ENCODE measurements at regions of chr14 and their contacts with region 1.

Region 1: GRCh38 chr14:50038398-50039119 is 77.8 kb downstream of the VCPKMT start:
- DNase-seq: peak; percentile 90
- ATAC-seq: peak; percentile 84
- H3K4me3 Mint-ChIP-seq: peak overlapping the region; percentile 69
- H3K27ac Mint-ChIP-seq: peak overlapping the region; percentile 97
- H3K4me1 Mint-ChIP-seq: peaks cover 61% of the 10 kb centered on the region
- H3K27me3 Mint-ChIP-seq: no peaks in the 10 kb centered on the region
- CTCF ChIP-seq: no peak

Region 2: GRCh38 chr14:49897968-49898367 is 140.6 kb before region 1 on chr14:
- CTCF ChIA-PET with region 1: interaction called, 3 read pairs
- POLR2A ChIA-PET with region 1: interaction called, 10 read pairs
- intact Hi-C with region 1: loop called (anchors 2 kb)
- DNase-seq: no peak
- ATAC-seq: no peak
- H3K4me3 Mint-ChIP-seq: peak overlapping the region; percentile 88
- H3K27ac Mint-ChIP-seq: peak overlapping the region; percentile 93
- H3K4me1 Mint-ChIP-seq: peaks cover 22% of the 10 kb centered on the region
- H3K27me3 Mint-ChIP-seq: no peaks in the 10 kb centered on the region
- CTCF ChIP-seq: no peak

Region 3: DNA sequence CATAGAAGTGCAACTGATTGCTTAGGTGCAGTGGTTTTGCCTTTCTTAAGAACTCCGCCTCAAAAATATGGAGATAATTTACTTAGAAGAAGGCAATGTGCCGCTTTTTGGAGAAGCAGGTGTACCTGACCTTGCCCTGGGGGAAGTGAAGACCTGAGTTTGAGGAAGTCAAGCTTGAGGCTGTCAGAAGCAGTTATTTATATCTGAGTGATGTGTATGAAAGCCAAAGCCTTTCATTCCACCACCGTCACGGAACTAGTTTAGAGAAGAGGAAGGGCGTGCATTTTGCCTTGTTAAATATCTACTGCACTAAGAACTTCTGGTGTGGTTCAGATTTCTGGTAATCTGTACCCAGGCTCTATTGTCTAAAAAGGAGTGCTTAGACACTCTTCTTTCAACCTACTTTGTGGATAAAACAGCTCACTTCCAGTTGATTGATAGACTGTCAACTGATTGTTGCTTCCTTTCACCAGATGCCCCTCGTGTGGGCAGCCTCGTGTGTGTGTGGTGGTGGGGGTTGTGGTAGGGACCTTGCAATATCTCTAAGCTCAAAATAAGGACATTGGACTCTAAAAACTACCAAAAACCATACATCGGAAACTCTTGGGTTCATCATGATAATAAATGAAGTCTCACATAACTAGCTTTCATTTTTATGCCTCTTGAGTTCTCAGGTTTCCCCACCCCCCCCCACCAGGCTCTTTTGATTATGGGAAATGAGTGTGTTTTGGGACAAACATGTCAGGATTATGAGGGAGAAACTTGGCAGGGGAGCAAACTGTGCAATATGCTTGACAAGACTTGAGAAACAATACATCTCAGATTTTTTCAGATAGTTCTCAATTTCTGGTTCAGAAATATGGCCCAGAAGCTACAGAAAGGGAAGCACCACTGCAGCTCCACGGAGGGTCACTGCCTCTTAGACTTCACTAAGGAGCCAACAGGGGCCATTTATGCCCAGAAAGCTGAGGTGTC is 67.1 kb before region 1 on chr14:
- CTCF ChIA-PET with region 1: interaction called, 3 read pairs
- POLR2A ChIA-PET with region 1: interaction called, 16 read pairs
- intact Hi-C with region 1: no loop called
- DNase-seq: peak; percentile 90
- ATAC-seq: peak; percentile 75
- H3K4me3 Mint-ChIP-seq: peak overlapping the region; percentile 69
- H3K27ac Mint-ChIP-seq: peak overlapping the region; percentile 94
- H3K4me1 Mint-ChIP-seq: peaks cover 56% of the 10 kb centered on the region
- H3K27me3 Mint-ChIP-seq: no peaks in the 10 kb centered on the region
- CTCF ChIP-seq: no peak

Region 4: DNA sequence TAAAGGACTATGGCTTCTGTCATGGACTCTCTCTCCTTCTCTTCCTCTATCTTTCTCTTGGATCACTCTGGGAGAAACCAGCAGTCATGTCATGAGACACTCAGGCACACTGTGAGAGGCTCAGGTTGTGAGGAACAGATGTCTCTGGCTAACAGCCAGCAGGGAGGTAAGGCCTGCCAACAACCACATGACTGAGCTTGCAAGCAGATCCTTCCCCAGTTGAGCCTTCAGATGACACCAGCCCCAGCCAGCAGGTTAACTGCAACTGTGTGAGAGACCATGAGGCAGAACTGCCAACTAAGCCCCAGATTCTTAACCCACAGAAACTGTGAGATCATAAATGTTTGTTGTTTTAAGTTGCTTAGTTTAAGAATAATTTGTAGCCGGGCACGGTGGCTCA is 12.8 kb before region 1 on chr14:
- CTCF ChIA-PET with region 1: interaction called, 6 read pairs
- POLR2A ChIA-PET with region 1: interaction called, 24 read pairs
- intact Hi-C with region 1: no loop called
- DNase-seq: peak; percentile 56
- ATAC-seq: no peak
- H3K4me3 Mint-ChIP-seq: no peak overlapping the region
- H3K27ac Mint-ChIP-seq: no peak overlapping the region
- H3K4me1 Mint-ChIP-seq: peaks cover 24% of the 10 kb centered on the region
- H3K27me3 Mint-ChIP-seq: no peaks in the 10 kb centered on the region
- CTCF ChIP-seq: no peak

Region 5: GRCh38 chr14:50085570-50086320 is 47.2 kb after region 1 on chr14:
- CTCF ChIA-PET with region 1: interaction called, 17 read pairs
- POLR2A ChIA-PET with region 1: interaction called, 32 read pairs
- intact Hi-C with region 1: loop called (anchors 2 kb)
- DNase-seq: peak; percentile 62
- ATAC-seq: peak; percentile 24
- H3K4me3 Mint-ChIP-seq: peak overlapping the region; percentile 56
- H3K27ac Mint-ChIP-seq: peak overlapping the region; percentile 98
- H3K4me1 Mint-ChIP-seq: peaks cover 94% of the 10 kb centered on the region
- H3K27me3 Mint-ChIP-seq: no peaks in the 10 kb centered on the region
- CTCF ChIP-seq: no peak

Region 6: GRCh38 chr14:50095895-50096294 is 57.3 kb after region 1 on chr14:
- CTCF ChIA-PET with region 1: interaction called, 4 read pairs
- POLR2A ChIA-PET with region 1: interaction called, 10 read pairs
- intact Hi-C with region 1: no loop called
- DNase-seq: no peak
- ATAC-seq: peak; percentile 60
- H3K4me3 Mint-ChIP-seq: peak overlapping the region; percentile 31
- H3K27ac Mint-ChIP-seq: peak overlapping the region; percentile 87
- H3K4me1 Mint-ChIP-seq: peaks cover 81% of the 10 kb centered on the region
- H3K27me3 Mint-ChIP-seq: no peaks in the 10 kb centered on the region
- CTCF ChIP-seq: no peak

Region 7: DNA sequence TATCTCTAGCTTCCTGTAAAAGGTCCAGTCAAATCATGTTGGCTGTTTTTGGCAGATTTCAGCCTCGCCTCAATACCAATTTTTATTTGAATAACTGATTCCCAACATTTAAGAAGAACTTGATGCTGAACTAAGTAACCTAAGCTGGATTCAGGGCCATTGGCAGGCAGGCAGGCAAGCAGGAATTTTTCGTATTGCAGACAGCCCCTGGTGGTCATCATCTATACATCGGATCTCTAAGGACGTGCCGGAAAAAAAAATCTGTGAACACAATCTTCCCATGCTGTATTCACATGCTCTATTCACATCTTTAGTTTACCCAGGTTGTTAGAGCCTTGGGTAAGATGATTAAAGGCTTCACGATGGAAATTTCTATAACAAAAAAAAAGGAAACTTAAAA is 70.8 kb after region 1 on chr14:
- CTCF ChIA-PET with region 1: interaction called, 14 read pairs
- POLR2A ChIA-PET with region 1: interaction called, 6 read pairs
- intact Hi-C with region 1: loop called (anchors 2 kb)
- DNase-seq: no peak
- ATAC-seq: no peak
- H3K4me3 Mint-ChIP-seq: no peak overlapping the region
- H3K27ac Mint-ChIP-seq: no peak overlapping the region
- H3K4me1 Mint-ChIP-seq: peaks cover 37% of the 10 kb centered on the region
- H3K27me3 Mint-ChIP-seq: no peaks in the 10 kb centered on the region
- CTCF ChIP-seq: no peak

Region 8: DNA sequence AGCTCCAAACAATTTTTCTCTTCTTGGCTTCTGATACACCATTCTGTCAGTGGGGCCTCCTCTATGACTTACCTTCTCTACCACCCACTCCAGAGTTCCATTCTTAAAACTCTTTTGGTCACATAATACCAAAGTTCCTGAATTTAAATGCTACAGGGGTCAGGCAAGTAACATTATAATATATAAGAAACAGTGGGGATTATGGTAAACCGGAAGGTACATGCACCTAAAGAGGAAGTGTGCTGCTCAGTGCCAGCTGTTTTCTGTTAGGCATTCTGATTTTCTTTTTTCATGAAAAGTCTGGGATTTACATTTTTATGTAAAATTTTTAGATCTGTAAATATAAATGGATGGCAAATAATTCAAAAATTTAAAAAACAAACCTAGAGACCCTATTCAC is 152.9 kb after region 1 on chr14:
- CTCF ChIA-PET with region 1: no interaction called
- POLR2A ChIA-PET with region 1: no interaction called
- intact Hi-C with region 1: no loop called
- DNase-seq: no peak
- ATAC-seq: no peak
- H3K4me3 Mint-ChIP-seq: no peak overlapping the region
- H3K27ac Mint-ChIP-seq: no peak overlapping the region
- H3K4me1 Mint-ChIP-seq: no peaks in the 10 kb centered on the region
- H3K27me3 Mint-ChIP-seq: no peaks in the 10 kb centered on the region
- CTCF ChIP-seq: no peak

Region 9: DNA sequence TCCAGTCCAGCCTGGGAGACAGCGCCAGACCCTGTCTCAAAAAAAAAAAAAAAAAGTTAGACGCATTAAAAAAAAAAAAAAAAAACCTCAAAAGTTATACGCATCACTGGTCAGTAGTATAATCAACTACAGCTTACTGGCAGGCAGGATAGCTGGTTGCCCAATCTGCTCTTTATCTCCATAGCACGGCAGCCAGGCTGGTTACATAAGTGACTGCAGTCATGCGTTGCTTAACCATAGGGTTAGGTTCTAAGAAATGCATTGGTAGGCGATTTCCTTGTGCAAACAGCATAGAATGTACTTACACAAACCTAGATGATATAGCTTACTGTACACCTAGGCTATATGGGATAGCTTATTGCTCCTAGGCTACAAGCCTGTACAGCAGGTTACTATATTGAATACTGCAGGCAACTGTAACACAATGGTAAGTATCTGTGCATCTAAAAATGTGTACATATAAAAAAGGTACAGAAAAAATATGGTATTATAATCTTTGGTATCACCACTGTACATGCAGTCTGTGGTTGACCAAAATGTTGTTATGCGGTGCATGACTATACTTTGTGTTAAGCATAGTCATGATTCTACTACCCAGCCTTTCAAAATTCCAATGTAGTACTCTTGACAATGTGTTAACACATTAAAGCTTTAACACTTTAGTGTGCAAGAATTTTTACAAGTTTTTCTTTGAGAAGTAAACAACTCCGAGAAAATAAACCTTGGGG is 265.3 kb after region 1 on chr14:
- CTCF ChIA-PET with region 1: no interaction called
- POLR2A ChIA-PET with region 1: no interaction called
- intact Hi-C with region 1: no loop called
- DNase-seq: no peak
- ATAC-seq: no peak
- H3K4me3 Mint-ChIP-seq: no peak overlapping the region
- H3K27ac Mint-ChIP-seq: no peak overlapping the region
- H3K4me1 Mint-ChIP-seq: peaks cover 3% of the 10 kb centered on the region
- H3K27me3 Mint-ChIP-seq: no peaks in the 10 kb centered on the region
- CTCF ChIP-seq: no peak

Measured in activated CD8-positive, alpha-beta T cell treated with anti-CD3 and anti-CD28 coated beads for 36 hours (primary cell).